CD14-positive monocyte (primary cell): ENCODE measurements at regions of chr22 and their contacts with region 1.

Region 1: GRCh38 chr22:25465949-25466348 is 98.5 kb upstream of the GRK3 start:
- DNase-seq: no peak
- H3K4me3 ChIP-seq: no peak overlapping the region
- H3K4me3 Mint-ChIP-seq: no peak overlapping the region
- H3K27ac ChIP-seq: no peak overlapping the region
- H3K27ac Mint-ChIP-seq: peak overlapping the region in 2 of 7 donors; percentile 55 to 66
- H3K4me1 ChIP-seq: no peaks in the 10 kb centered on the region
- H3K4me1 Mint-ChIP-seq: peaks cover 4% of the 10 kb centered on the region
- H3K27me3 ChIP-seq: no peaks in the 10 kb centered on the region
- H3K27me3 Mint-ChIP-seq: no peaks in the 10 kb centered on the region
- CTCF ChIP-seq: no peak

Region 2: DNA sequence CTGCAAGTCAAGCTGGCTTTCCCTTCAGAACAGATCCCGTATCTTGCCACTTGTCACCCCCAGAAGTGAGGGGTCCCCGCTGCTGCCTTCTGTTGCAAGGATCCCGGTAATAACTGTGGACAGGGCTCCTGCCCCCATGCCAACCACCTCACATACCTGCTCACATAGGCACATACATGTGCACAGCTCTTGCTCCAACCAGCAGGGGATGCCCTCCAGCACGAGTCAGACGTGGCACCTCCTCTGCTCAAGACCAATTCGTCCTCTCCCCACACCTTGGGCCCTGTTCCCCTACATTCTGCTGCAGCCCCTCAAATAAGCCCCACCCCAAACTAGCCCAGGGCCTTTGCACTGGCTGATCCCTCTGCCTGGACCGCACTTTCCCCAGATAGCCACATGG is 83.2 kb before region 1 on chr22:
- intact Hi-C with region 1: no loop called
- DNase-seq: no peak
- H3K4me3 ChIP-seq: no peak overlapping the region
- H3K4me3 Mint-ChIP-seq: no peak overlapping the region
- H3K27ac ChIP-seq: no peak overlapping the region
- H3K27ac Mint-ChIP-seq: peak overlapping the region in 1 of 7 donors; percentile 10
- H3K4me1 ChIP-seq: peaks cover 9 to 20% of the 10 kb centered on the region in 2 donors
- H3K4me1 Mint-ChIP-seq: peaks cover 24% of the 10 kb centered on the region
- H3K27me3 ChIP-seq: peaks cover 0 to 11% of the 10 kb centered on the region in 2 donors
- H3K27me3 Mint-ChIP-seq: peaks cover 11 to 16% (median 12%) of the 10 kb centered on the region in 3 donors
- CTCF ChIP-seq: no peak

Region 3: DNA sequence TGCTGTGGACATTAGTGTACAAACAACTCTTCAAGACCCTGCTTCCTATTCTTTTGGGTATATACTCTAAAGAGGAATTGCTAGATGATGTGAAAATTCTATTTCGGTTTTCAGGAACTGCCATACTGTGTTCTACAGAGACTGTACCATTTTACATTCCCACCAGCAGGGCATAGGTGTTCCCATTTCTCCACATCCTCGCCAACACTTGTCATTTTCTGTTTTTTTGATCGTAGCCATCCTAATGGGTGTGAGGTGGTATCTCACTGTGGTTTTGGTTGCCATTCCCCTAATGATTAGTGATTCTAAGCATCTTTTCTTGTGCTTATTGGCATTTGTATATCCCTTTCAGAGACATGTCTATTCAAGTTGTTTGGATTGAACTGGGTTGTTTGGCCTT is 68.8 kb after region 1 on chr22:
- intact Hi-C with region 1: loop called in 1 of 2 experiments (anchors 5 kb)
- DNase-seq: no peak
- H3K4me3 ChIP-seq: no peak overlapping the region
- H3K4me3 Mint-ChIP-seq: no peak overlapping the region
- H3K27ac ChIP-seq: no peak overlapping the region
- H3K27ac Mint-ChIP-seq: no peak overlapping the region
- H3K4me1 ChIP-seq: peaks cover 0 to 2% of the 10 kb centered on the region in 2 donors
- H3K4me1 Mint-ChIP-seq: no peaks in the 10 kb centered on the region
- H3K27me3 ChIP-seq: no peaks in the 10 kb centered on the region
- H3K27me3 Mint-ChIP-seq: peaks cover 0 to 1% (median 0%) of the 10 kb centered on the region in 3 donors
- CTCF ChIP-seq: no peak

Region 4: DNA sequence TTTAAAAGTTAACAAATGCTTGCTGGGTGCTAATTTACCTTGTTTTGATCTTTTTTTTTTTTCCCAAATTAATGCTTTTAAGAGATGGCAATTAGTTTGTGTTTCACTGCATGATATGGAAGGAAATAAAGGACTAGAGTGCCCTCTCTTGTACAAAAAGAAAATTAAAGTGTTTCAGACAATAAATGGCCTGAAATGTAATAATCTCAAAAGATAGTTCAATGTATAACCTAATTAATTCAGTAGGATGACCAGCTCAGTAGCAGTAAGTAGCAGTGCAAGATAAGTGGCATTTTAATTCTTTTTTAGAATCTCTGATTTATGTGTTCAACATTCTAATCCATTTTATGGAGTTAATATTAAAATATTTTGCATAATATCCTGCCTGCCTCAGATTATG is 236.1 kb after region 1 on chr22:
- intact Hi-C with region 1: loop called (anchors 10 kb)
- DNase-seq: no peak
- H3K4me3 ChIP-seq: no peak overlapping the region
- H3K4me3 Mint-ChIP-seq: no peak overlapping the region
- H3K27ac ChIP-seq: no peak overlapping the region
- H3K27ac Mint-ChIP-seq: peak overlapping the region in 1 of 7 donors; percentile 35
- H3K4me1 ChIP-seq: no peaks in the 10 kb centered on the region
- H3K4me1 Mint-ChIP-seq: no peaks in the 10 kb centered on the region
- H3K27me3 ChIP-seq: no peaks in the 10 kb centered on the region
- H3K27me3 Mint-ChIP-seq: no peaks in the 10 kb centered on the region
- CTCF ChIP-seq: peak; percentile 31

Region 5: DNA sequence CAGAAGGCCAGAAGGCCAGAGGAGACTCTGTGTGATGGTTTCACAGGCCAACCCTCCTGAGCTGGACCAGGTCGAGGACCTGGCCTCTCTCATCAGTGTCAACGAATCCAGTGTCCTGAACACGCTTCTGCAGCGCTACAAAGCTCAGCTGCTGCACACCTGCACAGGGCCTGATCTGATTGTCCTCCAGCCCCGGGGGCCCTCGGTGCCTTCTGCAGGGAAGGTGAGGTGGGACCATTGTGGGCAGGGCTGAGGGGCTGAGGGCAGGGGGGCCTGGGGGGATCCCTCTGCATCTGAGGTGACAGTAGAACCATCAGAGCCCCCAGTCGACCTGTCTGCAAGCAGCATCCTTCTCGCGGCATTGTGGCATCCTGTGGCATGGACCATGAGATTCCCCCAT is 306.3 kb after region 1 on chr22:
- intact Hi-C with region 1: loop called (anchors 1 to 2 kb)
- DNase-seq: no peak
- H3K4me3 ChIP-seq: no peak overlapping the region
- H3K4me3 Mint-ChIP-seq: no peak overlapping the region
- H3K27ac ChIP-seq: no peak overlapping the region
- H3K27ac Mint-ChIP-seq: no peak overlapping the region
- H3K4me1 ChIP-seq: no peaks in the 10 kb centered on the region
- H3K4me1 Mint-ChIP-seq: peaks cover 2% of the 10 kb centered on the region
- H3K27me3 ChIP-seq: peaks cover 0 to 4% of the 10 kb centered on the region in 2 donors
- H3K27me3 Mint-ChIP-seq: peaks cover 3 to 11% (median 10%) of the 10 kb centered on the region in 3 donors
- CTCF ChIP-seq: no peak

Region 6: GRCh38 chr22:25777870-25778269 is 311.9 kb after region 1 on chr22:
- intact Hi-C with region 1: loop called (anchors 1 to 2 kb)
- DNase-seq: peak in 2 of 3 donors; percentile 9 to 25
- H3K4me3 ChIP-seq: no peak overlapping the region
- H3K4me3 Mint-ChIP-seq: no peak overlapping the region
- H3K27ac ChIP-seq: no peak overlapping the region
- H3K27ac Mint-ChIP-seq: no peak overlapping the region
- H3K4me1 ChIP-seq: no peaks in the 10 kb centered on the region
- H3K4me1 Mint-ChIP-seq: peaks cover under 1% of the 10 kb centered on the region
- H3K27me3 ChIP-seq: peaks cover 0 to 6% of the 10 kb centered on the region in 2 donors
- H3K27me3 Mint-ChIP-seq: peaks cover 8 to 17% (median 16%) of the 10 kb centered on the region in 3 donors
- CTCF ChIP-seq: peak; percentile 25

Region 7: DNA sequence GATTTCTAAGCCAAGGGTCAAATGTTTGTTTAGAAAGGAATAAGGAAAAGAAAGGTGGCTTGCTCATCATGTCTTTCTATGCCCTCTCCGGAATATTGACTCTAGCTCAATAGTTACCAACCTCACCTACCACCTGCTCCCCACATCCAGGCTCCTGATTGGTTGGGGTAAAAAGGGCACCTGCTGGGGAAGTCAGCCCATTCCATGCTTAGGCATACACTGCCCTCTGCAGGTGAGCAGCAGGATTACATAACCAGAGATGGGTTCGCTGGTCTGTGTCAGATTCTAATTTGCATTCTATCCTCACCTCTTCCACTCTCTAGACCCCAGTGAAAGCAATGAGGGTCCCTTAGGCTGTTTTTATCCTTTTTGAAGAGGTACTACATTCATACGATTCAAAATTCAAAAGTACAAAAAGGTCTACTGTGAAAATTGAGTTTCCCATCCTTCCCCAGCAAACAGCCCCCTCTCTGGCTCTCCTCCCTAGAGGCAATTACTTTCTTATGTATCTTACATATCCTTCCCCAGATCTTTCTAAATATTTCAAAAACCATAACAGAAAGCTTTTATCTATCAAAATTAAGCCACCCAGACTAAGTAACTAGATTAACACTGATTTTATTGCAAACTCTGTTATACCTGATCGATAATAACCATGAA is 865.1 kb after region 1 on chr22:
- intact Hi-C with region 1: loop called in 1 of 2 experiments (anchors 10 kb)
- DNase-seq: peak; percentile 1 to 44 (median 37)
- H3K4me3 ChIP-seq: no peak overlapping the region
- H3K4me3 Mint-ChIP-seq: no peak overlapping the region
- H3K27ac ChIP-seq: no peak overlapping the region
- H3K27ac Mint-ChIP-seq: no peak overlapping the region
- H3K4me1 ChIP-seq: no peaks in the 10 kb centered on the region
- H3K4me1 Mint-ChIP-seq: no peaks in the 10 kb centered on the region
- H3K27me3 ChIP-seq: no peaks in the 10 kb centered on the region
- H3K27me3 Mint-ChIP-seq: peaks cover 3 to 6% (median 4%) of the 10 kb centered on the region in 3 donors
- CTCF ChIP-seq: peak; percentile 88